ENCODE measurements at regions of chr3 and their contacts with region 1.

Region 1: GRCh38 chr3:24521420-24522145 is 26.9 kb upstream of the THRB start:
- DNase-seq: peak; percentile 69 to 85
- ATAC-seq: peak; percentile 90 to 96 (median 92)
- H3K4me3 ChIP-seq: peak overlapping the region; percentile 84
- H3K27ac ChIP-seq: peak overlapping the region; percentile 88
- H3K4me1 ChIP-seq: peaks cover 6% of the 10 kb centered on the region
- H3K27me3 ChIP-seq: no peaks in the 10 kb centered on the region
- CTCF ChIP-seq: peak; percentile 15

Region 2: DNA sequence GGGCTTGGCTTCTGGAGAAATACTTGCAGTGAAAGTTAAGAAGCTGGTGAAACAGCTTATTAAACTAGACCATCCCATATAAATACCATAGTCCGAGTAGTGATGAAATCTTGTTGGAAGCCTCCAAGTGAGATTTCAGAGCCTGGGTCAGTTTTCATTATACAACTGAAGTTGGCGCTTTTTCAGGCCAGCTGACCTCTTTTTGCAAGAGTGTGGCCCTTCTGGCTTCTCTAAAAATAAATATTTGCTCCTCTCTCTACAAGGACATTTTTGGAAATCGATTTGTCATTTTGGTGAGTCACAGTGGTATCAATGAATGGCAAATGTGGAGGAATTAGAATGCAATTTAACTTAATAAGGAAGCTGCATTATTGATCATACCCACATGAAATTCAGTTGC is 24.3 kb after region 1 on chr3:
- intact Hi-C with region 1: no loop called
- DNase-seq: peak; percentile 46 to 64
- ATAC-seq: peak; percentile 85 to 97 (median 92)
- H3K4me3 ChIP-seq: peak overlapping the region; percentile 36
- H3K27ac ChIP-seq: peak overlapping the region; percentile 86
- H3K4me1 ChIP-seq: peaks cover 44% of the 10 kb centered on the region
- H3K27me3 ChIP-seq: no peaks in the 10 kb centered on the region
- CTCF ChIP-seq: no peak

Region 3: GRCh38 chr3:24582431-24583403 is 61.1 kb after region 1 on chr3:
- intact Hi-C with region 1: loop called (anchors 5 to 10 kb)
- DNase-seq: no peak
- ATAC-seq: peak; percentile 55 to 87 (median 70)
- H3K4me3 ChIP-seq: no peak overlapping the region
- H3K27ac ChIP-seq: no peak overlapping the region
- H3K4me1 ChIP-seq: peaks cover 7% of the 10 kb centered on the region
- H3K27me3 ChIP-seq: no peaks in the 10 kb centered on the region
- CTCF ChIP-seq: peak; percentile 39

Region 4: DNA sequence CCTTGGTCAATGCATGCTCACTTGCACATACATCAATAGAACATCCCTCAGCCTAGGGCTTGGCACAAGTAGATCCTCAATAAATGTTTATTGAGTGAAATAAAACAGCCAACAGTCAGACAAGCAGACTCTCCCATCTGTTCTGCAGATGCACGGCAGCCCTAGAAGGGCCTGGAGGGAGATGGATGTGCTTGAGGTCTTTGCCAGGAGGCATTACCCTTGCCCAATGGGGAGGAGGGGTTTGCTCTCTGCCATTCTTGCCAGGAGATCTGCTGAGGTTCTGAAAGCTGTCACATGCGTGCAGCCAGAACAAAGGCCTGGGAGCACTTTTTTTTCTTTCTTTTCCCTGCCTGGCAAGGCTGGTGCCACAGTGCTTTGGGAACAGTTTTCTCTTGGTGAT is 322.4 kb after region 1 on chr3:
- intact Hi-C with region 1: no loop called
- DNase-seq: no peak
- ATAC-seq: no peak
- H3K4me3 ChIP-seq: no peak overlapping the region
- H3K27ac ChIP-seq: no peak overlapping the region
- H3K4me1 ChIP-seq: no peaks in the 10 kb centered on the region
- H3K27me3 ChIP-seq: peaks cover 0 to 5% (median 0%) of the 10 kb centered on the region in 3 donors
- CTCF ChIP-seq: no peak